PC-9 (cell line): ENCODE measurements at regions of chr21 and their contacts with region 1.

Region 1: GRCh38 chr21:45404730-45405270 is at the start of gene COL18A1:
- DNase-seq: peak in 1 of 2 experiments; percentile 67
- H3K4me3 ChIP-seq: peak within 1 kb of the TSS; percentile 58; the same call in 1 of the 2 replicates
- H3K27ac ChIP-seq: no peak within 1 kb of the TSS
- H3K4me1 ChIP-seq: peaks cover 51% of the 10 kb centered on the region
- H3K27me3 ChIP-seq: no peaks in the 10 kb centered on the region
- CTCF ChIP-seq: no peak
- total RNA-seq, gene COL18A1: 82.4 and 106 TPM in 2 replicates

Region 2: GRCh38 chr21:45130324-45130774 is 274.5 kb before region 1 on chr21:
- CTCF ChIA-PET with region 1: no interaction called
- POLR2A ChIA-PET with region 1: no interaction called
- intact Hi-C with region 1: no loop called
- DNase-seq: no peak
- H3K4me3 ChIP-seq: no peak overlapping the region
- H3K27ac ChIP-seq: no peak overlapping the region
- H3K4me1 ChIP-seq: peaks cover 9% of the 10 kb centered on the region; the same call in 1 of the 2 replicates
- H3K27me3 ChIP-seq: no peaks in the 10 kb centered on the region
- CTCF ChIP-seq: no peak

Region 3: GRCh38 chr21:45167796-45168222 is 237.0 kb before region 1 on chr21:
- CTCF ChIA-PET with region 1: no interaction called
- POLR2A ChIA-PET with region 1: no interaction called
- intact Hi-C with region 1: no loop called
- DNase-seq: no peak
- H3K4me3 ChIP-seq: no peak overlapping the region
- H3K27ac ChIP-seq: no peak overlapping the region
- H3K4me1 ChIP-seq: 0 out of 2 replicates have a peak, but pooled peaks cover 5% of the 10 kb centered on the region
- H3K27me3 ChIP-seq: no peaks in the 10 kb centered on the region
- CTCF ChIP-seq: no peak

Region 4: GRCh38 chr21:45319461-45320211 is 85.2 kb before region 1 on chr21:
- CTCF ChIA-PET with region 1: no interaction called
- POLR2A ChIA-PET with region 1: interaction called, 4 read pairs
- intact Hi-C with region 1: loop called (anchors 5 kb)
- DNase-seq: peak in 1 of 2 experiments; percentile 61
- H3K4me3 ChIP-seq: no peak overlapping the region
- H3K27ac ChIP-seq: peak overlapping the region; percentile 53; the same call in 1 of the 2 replicates
- H3K4me1 ChIP-seq: peaks cover 26% of the 10 kb centered on the region
- H3K27me3 ChIP-seq: no peaks in the 10 kb centered on the region
- CTCF ChIP-seq: no peak

Region 5: DNA sequence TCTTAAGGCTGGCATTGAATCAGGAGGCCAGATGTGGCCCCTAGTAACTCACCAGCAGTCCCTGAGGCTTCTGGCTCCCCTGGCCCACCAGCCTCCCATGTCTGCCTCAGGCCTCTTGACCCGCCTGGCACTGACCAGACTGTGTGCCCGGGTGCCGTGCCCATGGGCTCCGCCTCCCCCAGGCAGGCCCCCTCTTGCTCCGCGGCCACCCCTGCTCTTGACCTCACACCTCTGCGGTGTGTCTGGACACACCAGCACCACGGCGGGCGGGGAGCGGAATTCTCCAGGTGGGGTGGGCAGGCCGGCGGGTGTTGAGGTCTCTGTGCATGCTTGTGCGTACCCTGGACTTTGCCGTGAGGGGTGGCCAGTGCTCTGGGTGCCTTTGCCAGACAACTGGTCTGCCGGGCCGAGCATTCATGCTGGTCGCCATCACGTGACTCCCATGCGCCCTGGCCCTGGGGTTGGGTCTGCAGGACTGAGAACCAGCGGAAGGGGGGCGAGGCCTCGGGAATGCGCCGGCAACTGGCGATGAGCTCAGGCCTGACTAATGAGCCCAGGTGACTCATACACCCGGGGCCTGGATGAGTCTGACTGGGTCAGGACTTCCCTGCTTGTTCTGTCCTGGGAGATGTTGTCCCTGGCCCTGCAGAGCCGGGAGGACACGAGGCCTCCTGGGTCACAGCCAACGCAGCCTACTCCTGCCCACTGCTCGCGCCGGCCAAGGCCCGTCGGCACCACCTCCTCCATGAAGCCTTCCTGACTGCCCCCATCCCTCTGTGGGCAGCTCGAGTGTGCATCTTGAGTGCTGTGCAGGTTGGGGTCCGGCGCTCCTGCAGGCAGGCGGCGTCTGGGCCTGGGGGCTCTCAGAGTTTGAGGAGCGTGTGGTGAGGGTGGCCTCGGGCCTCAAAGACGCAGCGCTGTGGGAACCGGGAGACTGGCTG is 22.8 kb after region 1 on chr21:
- CTCF ChIA-PET with region 1: no interaction called
- POLR2A ChIA-PET with region 1: no interaction called
- intact Hi-C with region 1: loop called (anchors 1 kb)
- DNase-seq: peak; percentile 75 to 91
- H3K4me3 ChIP-seq: no peak overlapping the region
- H3K27ac ChIP-seq: no peak overlapping the region
- H3K4me1 ChIP-seq: peaks cover 12% of the 10 kb centered on the region
- H3K27me3 ChIP-seq: no peaks in the 10 kb centered on the region
- CTCF ChIP-seq: no peak